T-cell (primary cell): ENCODE measurements at regions of chr11 and their contacts with region 1.

Region 1: GRCh38 chr11:95764267-95764898 is 25.2 kb downstream of the FAM76B start:
- DNase-seq: peak in 1 of 35 experiments; percentile 72
- ATAC-seq: peak; percentile 72 to 84 (median 78)
- H3K4me3 ChIP-seq: no peak overlapping the region
- H3K4me3 Mint-ChIP-seq: no peak overlapping the region
- H3K27ac ChIP-seq: no peak overlapping the region
- H3K27ac Mint-ChIP-seq: no peak overlapping the region
- H3K4me1 ChIP-seq: no peaks in the 10 kb centered on the region
- H3K4me1 Mint-ChIP-seq: no peaks in the 10 kb centered on the region
- H3K27me3 ChIP-seq: no peaks in the 10 kb centered on the region
- H3K27me3 Mint-ChIP-seq: no peaks in the 10 kb centered on the region

Region 2: GRCh38 chr11:95150946-95151684 is 613.3 kb before region 1 on chr11:
- CTCF ChIA-PET with region 1: interaction called, 18 to 63 read pairs
- POLR2A ChIA-PET with region 1: interaction called in 1 of 2 experiments, 3 read pairs
- DNase-seq: peak; percentile 79 to 96 (median 89)
- ATAC-seq: peak; percentile 90 to 94 (median 92)
- H3K4me3 ChIP-seq: peak overlapping the region; percentile 90 to 92
- H3K4me3 Mint-ChIP-seq: peak overlapping the region; percentile 82 to 91 (median 84)
- H3K27ac ChIP-seq: peak overlapping the region; percentile 87
- H3K27ac Mint-ChIP-seq: peak overlapping the region; percentile 99
- H3K4me1 ChIP-seq: peaks cover 11 to 43% of the 10 kb centered on the region in 2 experiments
- H3K4me1 Mint-ChIP-seq: peaks cover 35 to 40% (median 39%) of the 10 kb centered on the region in 3 donors
- H3K27me3 ChIP-seq: peaks cover 0 to 11% of the 10 kb centered on the region in 2 experiments
- H3K27me3 Mint-ChIP-seq: peaks cover 6% of the 10 kb centered on the region in 2 donors

Region 3: DNA sequence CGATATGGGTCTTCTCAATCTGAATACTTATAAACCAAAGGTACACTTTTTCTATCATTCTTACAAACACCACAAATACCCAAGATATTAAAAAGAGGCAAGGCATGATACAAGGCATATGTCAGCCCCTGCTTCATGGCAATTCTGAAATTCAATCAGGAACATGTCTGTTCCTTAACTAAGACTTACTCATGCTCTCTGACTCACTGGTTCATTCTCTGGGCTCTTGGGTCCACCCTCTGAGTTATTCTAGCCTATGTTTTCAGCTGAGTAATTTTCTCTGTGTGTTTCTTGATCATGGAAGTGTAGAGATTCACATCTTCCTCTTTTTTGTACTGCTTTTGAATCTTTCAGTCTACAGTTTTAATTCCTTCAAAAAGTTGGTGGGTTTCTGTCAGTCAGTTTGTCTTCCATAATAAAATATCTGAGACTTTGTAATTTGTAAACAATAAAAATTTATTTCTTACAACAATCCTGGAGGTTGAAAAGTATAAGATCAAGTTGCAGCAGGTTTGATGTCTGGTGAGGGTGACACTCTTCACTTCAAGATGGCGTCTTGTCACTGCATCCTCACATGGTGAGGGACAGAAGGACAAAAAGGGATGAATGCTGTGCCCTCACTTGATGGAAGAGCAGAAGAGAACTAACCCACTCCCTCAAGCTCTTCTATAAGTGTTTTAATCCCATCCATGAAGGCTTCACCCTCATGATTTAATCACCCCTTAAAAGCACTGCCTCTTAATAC is 186.5 kb before region 1 on chr11:
- CTCF ChIA-PET with region 1: interaction called in 1 of 2 experiments, 11 read pairs
- POLR2A ChIA-PET with region 1: no interaction called
- DNase-seq: peak in 2 of 35 experiments; percentile 0 to 2
- ATAC-seq: peak in 1 of 4 experiments; percentile 75
- H3K4me3 ChIP-seq: no peak overlapping the region
- H3K4me3 Mint-ChIP-seq: no peak overlapping the region
- H3K27ac ChIP-seq: no peak overlapping the region
- H3K27ac Mint-ChIP-seq: no peak overlapping the region
- H3K4me1 ChIP-seq: no peaks in the 10 kb centered on the region
- H3K4me1 Mint-ChIP-seq: peaks cover 0 to 2% (median 1%) of the 10 kb centered on the region in 3 donors
- H3K27me3 ChIP-seq: no peaks in the 10 kb centered on the region
- H3K27me3 Mint-ChIP-seq: no peaks in the 10 kb centered on the region